Caco-2 (cell line): ENCODE measurements at regions of chr6 and their contacts with region 1.

Region 1: DNA sequence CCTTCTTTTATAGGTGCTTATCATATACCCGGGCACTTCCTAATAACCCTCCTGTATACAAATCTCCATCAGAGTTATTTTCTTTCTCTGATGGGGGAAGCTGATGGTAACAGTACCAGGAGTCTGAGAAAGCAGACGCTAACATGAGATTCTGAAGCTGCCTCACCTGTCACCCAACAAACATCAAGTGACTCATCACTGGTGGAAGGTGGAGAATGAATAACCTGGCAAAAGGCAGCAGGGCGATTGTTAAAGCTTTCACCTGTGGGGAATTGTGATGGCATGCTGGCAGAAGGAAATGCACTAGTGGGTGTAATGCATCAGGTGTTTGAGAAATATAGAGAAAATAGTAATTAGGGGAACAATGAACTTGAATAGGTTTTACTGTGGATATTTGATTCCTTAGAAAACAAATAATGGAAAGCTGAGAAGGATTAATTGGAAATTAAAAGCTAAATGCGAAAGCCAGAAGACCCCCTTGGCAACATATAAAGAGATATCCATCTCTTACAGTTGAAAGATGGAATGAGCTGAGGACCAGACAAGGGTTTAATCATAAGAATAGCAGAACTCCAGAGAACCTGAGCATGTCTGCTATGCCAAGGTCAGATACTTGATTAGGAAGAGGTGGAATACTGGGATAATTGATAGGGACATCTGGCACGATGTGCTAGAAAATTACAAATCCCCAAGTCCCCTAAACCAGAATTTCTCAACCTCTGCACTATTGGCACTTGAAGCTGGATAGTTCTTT is 517.1 kb downstream of the PKHD1 start:
- DNase-seq: no peak
- H3K4me3 ChIP-seq: no peak overlapping the region
- H3K4me3 Mint-ChIP-seq: no peak overlapping the region
- H3K27ac Mint-ChIP-seq: no peak overlapping the region
- H3K4me1 ChIP-seq: no peaks in the 10 kb centered on the region
- H3K4me1 Mint-ChIP-seq: no peaks in the 10 kb centered on the region
- H3K27me3 ChIP-seq: no peaks in the 10 kb centered on the region; the same call in 1 of the 2 replicates
- H3K27me3 Mint-ChIP-seq: no peaks in the 10 kb centered on the region
- CTCF ChIP-seq: no peak

Region 2: DNA sequence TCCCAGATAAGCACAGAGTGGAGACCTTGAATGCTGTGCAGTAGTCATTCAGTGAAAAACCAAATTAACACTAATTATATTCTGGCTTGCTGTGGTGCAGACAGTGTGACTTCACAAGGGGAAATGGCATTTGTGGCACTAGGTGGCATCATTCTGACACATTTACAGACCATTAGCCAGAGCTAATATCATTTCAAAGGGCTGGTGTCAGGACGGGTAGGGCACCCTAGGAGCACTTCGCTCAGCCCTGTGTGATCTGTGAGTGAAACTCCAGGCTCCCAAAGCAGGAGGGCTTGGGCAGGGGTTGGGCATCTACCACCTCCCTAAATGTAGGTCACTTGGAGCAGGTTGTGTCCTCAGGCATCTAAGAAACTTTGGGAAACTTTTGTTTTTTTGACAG is 38.7 kb before region 1 on chr6:
- CTCF ChIA-PET with region 1: no interaction called
- POLR2A ChIA-PET with region 1: no interaction called
- intact Hi-C with region 1: no loop called
- DNase-seq: no peak
- H3K4me3 ChIP-seq: no peak overlapping the region
- H3K4me3 Mint-ChIP-seq: no peak overlapping the region
- H3K27ac Mint-ChIP-seq: no peak overlapping the region
- H3K4me1 ChIP-seq: no peaks in the 10 kb centered on the region
- H3K4me1 Mint-ChIP-seq: no peaks in the 10 kb centered on the region
- H3K27me3 ChIP-seq: no peaks in the 10 kb centered on the region
- H3K27me3 Mint-ChIP-seq: peaks cover 5% of the 10 kb centered on the region
- CTCF ChIP-seq: no peak

Region 3: DNA sequence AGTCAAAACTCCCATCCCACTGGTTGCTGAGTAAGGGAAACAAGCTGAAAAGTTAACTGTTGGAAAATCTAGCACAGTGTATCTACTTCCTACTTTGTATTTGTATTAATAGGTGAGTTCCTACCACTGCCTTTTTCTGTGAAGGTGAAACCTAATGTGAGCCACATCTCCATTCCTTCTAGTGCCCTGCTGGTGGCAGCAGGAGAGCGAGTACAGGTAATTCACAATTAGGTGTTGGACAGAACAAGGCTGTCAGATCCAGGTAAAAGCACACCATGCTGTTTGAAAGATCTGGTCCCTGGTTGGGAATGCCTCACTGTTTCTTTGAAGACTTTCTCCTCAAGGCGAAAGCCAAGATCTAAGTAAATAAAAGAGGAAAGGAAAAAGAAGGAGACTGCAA is 11.3 kb before region 1 on chr6:
- CTCF ChIA-PET with region 1: no interaction called
- POLR2A ChIA-PET with region 1: no interaction called
- intact Hi-C with region 1: no loop called
- DNase-seq: peak; percentile 29 to 37
- H3K4me3 ChIP-seq: no peak overlapping the region
- H3K4me3 Mint-ChIP-seq: no peak overlapping the region
- H3K27ac Mint-ChIP-seq: no peak overlapping the region
- H3K4me1 ChIP-seq: no peaks in the 10 kb centered on the region
- H3K4me1 Mint-ChIP-seq: no peaks in the 10 kb centered on the region
- H3K27me3 ChIP-seq: no peaks in the 10 kb centered on the region
- H3K27me3 Mint-ChIP-seq: peaks cover 12% of the 10 kb centered on the region
- CTCF ChIP-seq: peak; percentile 27 to 54

Region 4: GRCh38 chr6:51613554-51613953 is 43.2 kb after region 1 on chr6:
- CTCF ChIA-PET with region 1: no interaction called
- POLR2A ChIA-PET with region 1: no interaction called
- intact Hi-C with region 1: no loop called
- DNase-seq: no peak
- H3K4me3 ChIP-seq: no peak overlapping the region
- H3K4me3 Mint-ChIP-seq: no peak overlapping the region
- H3K27ac Mint-ChIP-seq: no peak overlapping the region
- H3K4me1 ChIP-seq: 0 out of 2 replicates have a peak, but pooled peaks cover 1% of the 10 kb centered on the region
- H3K4me1 Mint-ChIP-seq: no peaks in the 10 kb centered on the region
- H3K27me3 ChIP-seq: no peaks in the 10 kb centered on the region
- H3K27me3 Mint-ChIP-seq: peaks cover 5% of the 10 kb centered on the region
- CTCF ChIP-seq: no peak

Region 5: DNA sequence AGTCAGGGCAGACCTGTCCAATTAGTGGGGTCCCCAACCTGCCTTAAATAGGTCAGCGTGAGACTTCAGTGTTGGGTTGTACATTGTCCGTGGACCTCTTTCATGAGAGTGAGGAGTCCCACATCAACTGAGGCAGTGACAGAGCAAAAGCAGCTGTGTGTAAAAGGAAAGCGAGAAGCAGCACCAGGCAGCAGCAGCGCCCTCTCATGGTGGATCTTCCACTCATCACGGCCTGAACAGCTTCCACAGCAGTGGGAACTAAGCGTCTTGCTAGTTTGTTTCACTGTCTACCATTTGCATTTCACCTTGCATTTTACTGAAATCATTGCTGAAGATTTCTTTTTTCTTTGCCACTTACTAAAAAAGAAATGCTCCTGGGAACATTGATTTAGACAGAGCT is 183.3 kb after region 1 on chr6:
- CTCF ChIA-PET with region 1: no interaction called
- POLR2A ChIA-PET with region 1: no interaction called
- intact Hi-C with region 1: loop called (anchors 10 kb)
- DNase-seq: peak in 1 of 2 experiments; percentile 25
- H3K4me3 ChIP-seq: no peak overlapping the region
- H3K4me3 Mint-ChIP-seq: no peak overlapping the region
- H3K27ac Mint-ChIP-seq: no peak overlapping the region
- H3K4me1 ChIP-seq: no peaks in the 10 kb centered on the region
- H3K4me1 Mint-ChIP-seq: no peaks in the 10 kb centered on the region
- H3K27me3 ChIP-seq: no peaks in the 10 kb centered on the region
- H3K27me3 Mint-ChIP-seq: no peaks in the 10 kb centered on the region
- CTCF ChIP-seq: peak; percentile 23 to 40

Region 6: GRCh38 chr6:51788121-51788520 is 217.8 kb after region 1 on chr6:
- CTCF ChIA-PET with region 1: no interaction called
- POLR2A ChIA-PET with region 1: no interaction called
- intact Hi-C with region 1: no loop called
- DNase-seq: no peak
- H3K4me3 ChIP-seq: no peak overlapping the region
- H3K4me3 Mint-ChIP-seq: no peak overlapping the region
- H3K27ac Mint-ChIP-seq: no peak overlapping the region
- H3K4me1 ChIP-seq: no peaks in the 10 kb centered on the region
- H3K4me1 Mint-ChIP-seq: no peaks in the 10 kb centered on the region
- H3K27me3 ChIP-seq: no peaks in the 10 kb centered on the region
- H3K27me3 Mint-ChIP-seq: no peaks in the 10 kb centered on the region
- CTCF ChIP-seq: no peak